PC-3 (cell line): ENCODE measurements at regions of chr1 and their contacts with region 1.

Region 1: GRCh38 chr1:158124999-158125398 is 55.7 kb upstream of the CD1D start:
- DNase-seq: peak; percentile 98
- ATAC-seq: peak; percentile 92
- H3K4me3 ChIP-seq: no peak overlapping the region
- H3K27ac ChIP-seq: no peak overlapping the region
- H3K4me1 ChIP-seq: no peaks in the 10 kb centered on the region
- H3K27me3 ChIP-seq: peaks cover 40% of the 10 kb centered on the region
- CTCF ChIP-seq: peak; percentile 97

Region 2: DNA sequence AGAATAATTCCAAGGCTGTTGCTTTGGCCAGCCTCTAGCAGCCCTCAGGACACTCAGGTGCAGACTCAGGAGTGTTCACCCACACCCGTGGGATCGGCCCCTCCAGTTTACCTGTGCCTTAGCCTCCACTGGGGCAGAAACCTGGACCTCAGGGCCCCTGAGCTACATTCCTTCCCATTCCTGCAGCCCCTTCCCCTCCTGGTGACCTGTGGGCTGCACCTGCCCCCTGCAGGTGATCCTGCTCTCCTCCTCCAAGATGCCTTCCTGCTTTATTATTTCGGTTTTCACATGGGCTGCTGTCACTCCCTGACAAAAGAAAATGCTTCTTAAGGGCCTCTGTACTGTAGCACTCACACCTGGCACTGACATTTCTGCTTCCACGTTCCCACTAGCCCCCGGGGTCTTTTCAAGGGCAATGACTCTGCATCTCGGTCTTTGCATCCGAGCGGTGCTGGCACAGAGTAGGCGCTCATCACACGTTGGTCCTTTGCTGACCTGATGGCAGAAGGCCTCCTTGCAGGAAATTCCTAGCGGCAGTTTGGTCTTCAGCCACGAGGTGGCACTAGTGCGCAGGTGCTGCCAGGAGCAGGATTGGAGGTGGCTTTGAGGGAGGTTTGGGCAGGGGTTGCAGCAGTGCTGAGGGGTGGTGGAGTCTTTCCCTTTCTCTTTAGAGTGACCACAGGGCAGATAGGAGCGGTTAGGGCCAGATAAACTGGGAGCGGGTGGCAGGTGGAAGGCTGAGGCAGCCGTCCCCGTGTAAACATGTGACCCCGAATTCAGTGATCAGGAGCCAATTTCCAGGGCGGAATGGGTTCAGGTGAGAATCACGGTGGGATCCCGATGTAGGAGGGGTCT is 961.5 kb before region 1 on chr1:
- CTCF ChIA-PET with region 1: no interaction called
- POLR2A ChIA-PET with region 1: no interaction called
- intact Hi-C with region 1: loop called (anchors 10 kb)
- DNase-seq: peak; percentile 91
- ATAC-seq: peak; percentile 89
- H3K4me3 ChIP-seq: peak overlapping the region; percentile 50; the same call in 1 of the 2 replicates
- H3K27ac ChIP-seq: no peak overlapping the region
- H3K4me1 ChIP-seq: no peaks in the 10 kb centered on the region
- H3K27me3 ChIP-seq: peaks cover 69% of the 10 kb centered on the region
- CTCF ChIP-seq: peak; percentile 95

Region 3: GRCh38 chr1:157369808-157370521 is 755.0 kb before region 1 on chr1:
- CTCF ChIA-PET with region 1: no interaction called
- POLR2A ChIA-PET with region 1: no interaction called
- intact Hi-C with region 1: loop called (anchors 1 kb)
- DNase-seq: peak; percentile 88
- ATAC-seq: peak; percentile 88
- H3K4me3 ChIP-seq: no peak overlapping the region
- H3K27ac ChIP-seq: no peak overlapping the region
- H3K4me1 ChIP-seq: no peaks in the 10 kb centered on the region
- H3K27me3 ChIP-seq: peaks cover 24% of the 10 kb centered on the region
- CTCF ChIP-seq: peak; percentile 89

Region 4: GRCh38 chr1:157580179-157580827 is 544.7 kb before region 1 on chr1:
- CTCF ChIA-PET with region 1: interaction called, 19 read pairs
- POLR2A ChIA-PET with region 1: no interaction called
- intact Hi-C with region 1: loop called (anchors 1 kb)
- DNase-seq: peak; percentile 90
- ATAC-seq: peak; percentile 70
- H3K4me3 ChIP-seq: no peak overlapping the region
- H3K27ac ChIP-seq: no peak overlapping the region
- H3K4me1 ChIP-seq: no peaks in the 10 kb centered on the region
- H3K27me3 ChIP-seq: peaks cover 58% of the 10 kb centered on the region
- CTCF ChIP-seq: peak; percentile 95

Region 5: GRCh38 chr1:157878059-157878458 is 246.9 kb before region 1 on chr1:
- CTCF ChIA-PET with region 1: interaction called, 9 read pairs
- POLR2A ChIA-PET with region 1: no interaction called
- intact Hi-C with region 1: loop called (anchors 1 kb)
- DNase-seq: peak; percentile 67
- ATAC-seq: peak; percentile 95
- H3K4me3 ChIP-seq: no peak overlapping the region
- H3K27ac ChIP-seq: no peak overlapping the region
- H3K4me1 ChIP-seq: no peaks in the 10 kb centered on the region
- H3K27me3 ChIP-seq: peaks cover 32% of the 10 kb centered on the region; the same call in 1 of the 2 replicates
- CTCF ChIP-seq: peak; percentile 78

Region 6: DNA sequence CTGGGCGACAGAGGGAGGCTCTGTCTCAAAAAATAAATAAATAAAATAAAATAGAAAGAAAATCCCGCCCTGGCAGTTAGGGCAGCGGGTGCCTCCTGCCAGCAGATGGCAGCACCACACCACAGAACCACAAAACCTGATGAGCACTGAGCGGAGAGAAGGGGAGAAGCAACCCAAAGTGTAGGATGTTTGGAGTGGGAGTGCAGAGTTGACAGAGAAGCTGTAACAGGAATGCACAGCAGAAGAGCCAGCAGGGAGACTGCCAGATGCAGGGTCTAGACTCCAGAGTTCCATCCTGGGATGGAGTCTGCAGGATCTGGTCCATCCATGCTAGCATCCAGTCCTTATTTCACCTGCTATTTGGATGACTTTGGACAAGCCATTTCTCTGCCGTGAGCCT is 161.3 kb before region 1 on chr1:
- CTCF ChIA-PET with region 1: interaction called, 27 read pairs
- POLR2A ChIA-PET with region 1: no interaction called
- intact Hi-C with region 1: loop called (anchors 1 kb)
- DNase-seq: peak; percentile 87
- ATAC-seq: peak; percentile 81
- H3K4me3 ChIP-seq: no peak overlapping the region
- H3K27ac ChIP-seq: no peak overlapping the region
- H3K4me1 ChIP-seq: peaks cover 22% of the 10 kb centered on the region
- H3K27me3 ChIP-seq: peaks cover 24% of the 10 kb centered on the region
- CTCF ChIP-seq: peak; percentile 87

Region 7: GRCh38 chr1:157969697-157970485 is 155.1 kb before region 1 on chr1:
- CTCF ChIA-PET with region 1: interaction called, 27 read pairs
- POLR2A ChIA-PET with region 1: no interaction called
- intact Hi-C with region 1: no loop called
- DNase-seq: peak; percentile 95
- ATAC-seq: peak; percentile 80
- H3K4me3 ChIP-seq: peak overlapping the region; percentile 20; the same call in 1 of the 2 replicates
- H3K27ac ChIP-seq: peak overlapping the region; percentile 86
- H3K4me1 ChIP-seq: peaks cover 18% of the 10 kb centered on the region
- H3K27me3 ChIP-seq: 0 out of 2 replicates have a peak, but pooled peaks cover under 1% of the 10 kb centered on the region
- CTCF ChIP-seq: peak; percentile 97

Region 8: DNA sequence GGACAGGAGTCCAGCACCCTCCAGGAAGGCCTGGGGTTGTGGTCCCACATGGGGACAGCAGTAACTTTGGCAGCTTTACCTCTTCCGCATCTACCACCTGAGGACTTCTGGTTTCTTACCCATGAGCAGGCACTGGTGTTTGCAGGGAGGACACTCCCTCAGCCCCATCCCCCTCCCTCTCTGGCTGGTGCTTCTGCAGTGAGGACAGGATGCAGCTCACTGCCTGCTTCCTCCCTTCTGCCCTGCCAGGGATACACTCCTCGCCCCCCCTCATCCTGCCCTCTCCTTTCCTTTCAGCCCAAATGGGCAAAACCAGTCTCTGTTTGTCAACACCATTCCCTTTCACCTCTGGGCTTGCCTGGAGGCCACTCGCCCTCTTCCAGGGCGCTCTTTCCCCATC is 69.1 kb before region 1 on chr1:
- CTCF ChIA-PET with region 1: no interaction called
- POLR2A ChIA-PET with region 1: no interaction called
- intact Hi-C with region 1: no loop called
- DNase-seq: peak; percentile 19
- ATAC-seq: peak; percentile 64
- H3K4me3 ChIP-seq: no peak overlapping the region
- H3K27ac ChIP-seq: no peak overlapping the region
- H3K4me1 ChIP-seq: no peaks in the 10 kb centered on the region
- H3K27me3 ChIP-seq: no peaks in the 10 kb centered on the region
- CTCF ChIP-seq: no peak

Region 9: GRCh38 chr1:158295791-158296190 is 170.8 kb after region 1 on chr1:
- CTCF ChIA-PET with region 1: no interaction called
- POLR2A ChIA-PET with region 1: no interaction called
- intact Hi-C with region 1: no loop called
- DNase-seq: no peak
- ATAC-seq: no peak
- H3K4me3 ChIP-seq: no peak overlapping the region
- H3K27ac ChIP-seq: no peak overlapping the region
- H3K4me1 ChIP-seq: no peaks in the 10 kb centered on the region
- H3K27me3 ChIP-seq: peaks cover 11% of the 10 kb centered on the region; the same call in 1 of the 2 replicates
- CTCF ChIP-seq: no peak